Transverse colon (tissue), 4 donors: ENCODE measurements at regions of chr6 and their contacts with region 1.

Region 1: DNA sequence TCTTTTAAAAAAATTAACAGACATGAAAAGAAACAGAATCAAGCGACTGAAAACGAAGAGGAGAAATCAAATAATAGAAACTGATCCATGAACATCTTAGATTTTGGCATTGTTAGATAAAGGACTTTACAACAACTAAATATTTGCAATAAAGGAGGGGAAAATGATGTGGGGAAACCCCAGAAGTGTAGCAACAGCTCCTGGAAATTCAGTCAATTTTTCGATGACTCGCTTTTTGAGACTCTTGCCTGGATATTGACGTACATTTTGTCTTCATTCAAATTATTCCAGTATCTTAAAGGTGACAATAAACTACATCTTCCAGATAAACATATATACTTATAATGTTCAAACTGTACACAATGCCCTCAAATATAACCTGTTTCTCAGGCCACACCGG is 44.1 kb downstream of the ADGB start:
- DNase-seq: no peak
- H3K4me3 ChIP-seq: no peak overlapping the region
- H3K27ac ChIP-seq: no peak overlapping the region
- H3K4me1 ChIP-seq: no peaks in the 10 kb centered on the region
- H3K27me3 ChIP-seq: no peaks in the 10 kb centered on the region
- CTCF ChIP-seq: no peak
- EP300 ChIP-seq: no peak
- POLR2A ChIP-seq: no peak

Region 2: DNA sequence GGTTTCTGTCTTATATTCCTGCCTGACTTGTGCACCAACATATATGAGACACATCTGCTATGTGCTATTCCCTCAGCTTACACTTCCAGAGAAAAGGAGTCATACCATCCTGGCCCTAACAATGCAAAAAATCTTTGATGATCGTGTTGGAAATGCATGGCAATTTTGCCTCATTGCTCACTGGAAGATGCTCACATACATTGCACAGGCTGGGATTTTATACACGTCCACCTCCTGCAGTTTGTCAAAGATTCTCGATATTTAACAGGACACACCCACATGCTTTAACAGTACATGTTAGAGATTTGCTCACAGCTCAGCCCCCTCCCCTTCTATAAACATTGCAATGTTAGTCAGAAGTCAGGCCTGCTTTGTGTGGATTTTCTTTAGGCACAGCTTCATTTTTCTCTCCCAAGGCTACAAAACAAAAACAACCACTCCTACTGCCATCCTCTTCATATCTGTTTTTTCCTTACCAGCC is 22.0 kb after region 1 on chr6:
- in situ Hi-C with region 1: no loop called
- intact Hi-C with region 1: loop called (anchors 1 kb)
- DNase-seq: no peak
- H3K4me3 ChIP-seq: no peak overlapping the region
- H3K27ac ChIP-seq: no peak overlapping the region
- H3K4me1 ChIP-seq: no peaks in the 10 kb centered on the region
- H3K27me3 ChIP-seq: no peaks in the 10 kb centered on the region
- CTCF ChIP-seq: no peak
- EP300 ChIP-seq: no peak
- POLR2A ChIP-seq: no peak

Region 3: GRCh38 chr6:146700078-146700686 is 57.3 kb after region 1 on chr6:
- in situ Hi-C with region 1: no loop called
- intact Hi-C with region 1: no loop called
- DNase-seq: peak; percentile 78
- H3K4me3 ChIP-seq: no peak overlapping the region
- H3K27ac ChIP-seq: no peak overlapping the region
- H3K4me1 ChIP-seq: no peaks in the 10 kb centered on the region
- H3K27me3 ChIP-seq: no peaks in the 10 kb centered on the region
- CTCF ChIP-seq: peak; percentile 70 to 82 (median 71)
- EP300 ChIP-seq: no peak
- POLR2A ChIP-seq: no peak